MCF 10A (cell line): ENCODE measurements at regions of chr11 and their contacts with region 1.

Region 1: GRCh38 chr11:27158722-27159679 is 118.4 kb downstream of the BBOX1 start:
- DNase-seq: peak; percentile 80
- H3K4me3 Mint-ChIP-seq: no peak overlapping the region
- H3K27ac Mint-ChIP-seq: no peak overlapping the region
- H3K4me1 Mint-ChIP-seq: peaks cover 11% of the 10 kb centered on the region
- H3K27me3 Mint-ChIP-seq: no peaks in the 10 kb centered on the region
- CTCF ChIP-seq: peak; percentile 84

Region 2: GRCh38 chr11:26286472-26287066 is 872.4 kb before region 1 on chr11:
- CTCF ChIA-PET with region 1: interaction called, 12 read pairs
- POLR2A ChIA-PET with region 1: no interaction called
- intact Hi-C with region 1: no loop called
- DNase-seq: peak; percentile 31
- H3K4me3 Mint-ChIP-seq: no peak overlapping the region
- H3K27ac Mint-ChIP-seq: no peak overlapping the region
- H3K4me1 Mint-ChIP-seq: peaks cover 6% of the 10 kb centered on the region
- H3K27me3 Mint-ChIP-seq: peaks cover 18% of the 10 kb centered on the region
- CTCF ChIP-seq: peak; percentile 47

Region 3: GRCh38 chr11:26522912-26523610 is 635.9 kb before region 1 on chr11:
- CTCF ChIA-PET with region 1: interaction called, 6 read pairs
- POLR2A ChIA-PET with region 1: no interaction called
- intact Hi-C with region 1: loop called (anchors 2 kb)
- DNase-seq: peak; percentile 47
- H3K4me3 Mint-ChIP-seq: no peak overlapping the region
- H3K27ac Mint-ChIP-seq: no peak overlapping the region
- H3K4me1 Mint-ChIP-seq: no peaks in the 10 kb centered on the region
- H3K27me3 Mint-ChIP-seq: peaks cover 56% of the 10 kb centered on the region
- CTCF ChIP-seq: peak; percentile 33

Region 4: DNA sequence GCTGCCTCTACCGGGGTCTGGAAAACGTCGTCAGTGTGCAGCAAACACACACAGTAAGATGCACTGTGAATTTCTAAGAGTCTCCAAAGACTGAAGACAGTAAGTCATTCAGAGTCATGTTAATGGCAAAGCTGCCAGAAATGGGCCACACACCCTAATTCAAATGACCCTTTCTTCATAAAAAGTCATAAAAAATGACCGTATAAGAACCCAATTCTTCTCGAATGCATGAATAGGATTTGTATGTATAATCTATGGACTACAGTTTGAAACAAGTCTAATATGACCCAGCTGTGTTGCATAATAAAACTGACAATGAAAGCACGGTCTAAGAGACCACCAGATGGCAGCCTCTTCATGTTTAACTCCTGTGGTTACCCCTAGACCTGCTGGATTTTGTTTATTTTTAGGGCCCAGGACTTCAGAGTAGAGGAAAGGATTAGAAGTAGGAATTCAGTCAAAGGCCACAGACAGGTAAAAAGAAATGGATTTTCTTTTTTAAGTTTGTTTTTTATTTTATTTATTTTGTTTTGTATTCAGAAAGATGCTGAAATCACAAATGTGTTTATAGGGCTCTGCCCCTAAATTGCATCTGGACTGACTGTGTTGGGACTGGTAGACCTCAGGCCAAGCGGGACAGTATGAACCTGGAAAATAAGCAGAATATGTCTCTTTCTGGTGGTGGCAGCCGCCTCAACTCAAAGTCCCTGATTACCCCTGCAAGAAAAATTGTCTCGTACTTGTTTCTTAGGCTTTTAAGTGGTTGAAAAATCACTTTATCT is 405.1 kb before region 1 on chr11:
- CTCF ChIA-PET with region 1: interaction called, 62 read pairs
- POLR2A ChIA-PET with region 1: no interaction called
- intact Hi-C with region 1: loop called (anchors 1 kb)
- DNase-seq: peak; percentile 75
- H3K4me3 Mint-ChIP-seq: no peak overlapping the region
- H3K27ac Mint-ChIP-seq: no peak overlapping the region
- H3K4me1 Mint-ChIP-seq: no peaks in the 10 kb centered on the region
- H3K27me3 Mint-ChIP-seq: no peaks in the 10 kb centered on the region
- CTCF ChIP-seq: peak; percentile 84

Region 5: GRCh38 chr11:27040302-27041115 is 118.5 kb before region 1 on chr11 and contains the start of gene BBOX1:
- CTCF ChIA-PET with region 1: interaction called, 12 read pairs
- POLR2A ChIA-PET with region 1: interaction called, 3 read pairs
- intact Hi-C with region 1: no loop called
- DNase-seq: peak; percentile 92
- H3K4me3 Mint-ChIP-seq: peak within 1 kb of the TSS; percentile 59
- H3K27ac Mint-ChIP-seq: peak within 1 kb of the TSS; percentile 91
- H3K4me1 Mint-ChIP-seq: peaks cover 25% of the 10 kb centered on the region
- H3K27me3 Mint-ChIP-seq: no peaks in the 10 kb centered on the region
- CTCF ChIP-seq: no peak
- total RNA-seq, gene BBOX1: 0.33 TPM in 1 of 2 replicates, not detected in the other

Region 6: GRCh38 chr11:27107548-27107947 is 51.5 kb before region 1 on chr11:
- CTCF ChIA-PET with region 1: no interaction called
- POLR2A ChIA-PET with region 1: no interaction called
- intact Hi-C with region 1: no loop called
- DNase-seq: no peak
- H3K4me3 Mint-ChIP-seq: no peak overlapping the region
- H3K27ac Mint-ChIP-seq: no peak overlapping the region
- H3K4me1 Mint-ChIP-seq: no peaks in the 10 kb centered on the region
- H3K27me3 Mint-ChIP-seq: no peaks in the 10 kb centered on the region
- CTCF ChIP-seq: no peak

Region 7: DNA sequence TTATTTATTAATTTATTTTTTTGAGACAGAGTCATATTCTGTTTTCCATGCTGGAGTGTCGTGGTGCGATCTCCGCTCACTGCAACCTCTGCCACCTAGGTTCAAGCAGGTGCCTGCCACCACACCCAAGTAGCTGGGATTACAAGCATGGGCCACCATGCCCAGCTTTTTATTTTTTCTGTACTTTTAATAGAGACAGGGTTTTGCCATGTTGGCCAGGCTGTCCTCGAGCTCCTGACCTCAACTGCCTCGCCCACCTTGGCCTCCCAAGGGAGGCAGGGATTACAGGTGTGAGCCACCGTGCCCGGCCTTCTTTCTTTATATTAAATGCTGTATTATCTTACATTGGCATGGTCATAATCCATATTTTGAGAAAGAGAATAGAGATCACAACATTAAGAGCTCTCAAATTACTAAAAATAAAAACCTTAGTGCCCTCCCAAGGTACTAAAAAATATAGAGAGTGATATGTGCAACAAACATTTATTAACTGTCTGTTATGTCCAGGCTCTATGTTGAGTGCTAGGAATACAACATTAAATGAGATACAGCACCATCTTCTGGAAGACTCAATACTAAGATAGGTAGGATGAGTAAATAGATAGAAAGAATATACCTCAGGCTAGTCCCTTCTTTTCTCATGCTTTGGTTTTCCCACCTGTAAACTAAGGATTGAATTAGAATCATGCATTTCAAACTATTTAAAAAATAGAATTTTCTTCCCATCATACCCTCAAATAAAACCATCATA is 34.3 kb before region 1 on chr11:
- CTCF ChIA-PET with region 1: interaction called, 8 read pairs
- POLR2A ChIA-PET with region 1: interaction called, 4 read pairs
- intact Hi-C with region 1: loop called (anchors 2 kb)
- DNase-seq: peak; percentile 45
- H3K4me3 Mint-ChIP-seq: no peak overlapping the region
- H3K27ac Mint-ChIP-seq: no peak overlapping the region
- H3K4me1 Mint-ChIP-seq: peaks cover 5% of the 10 kb centered on the region
- H3K27me3 Mint-ChIP-seq: no peaks in the 10 kb centered on the region
- CTCF ChIP-seq: peak; percentile 28

Region 8: DNA sequence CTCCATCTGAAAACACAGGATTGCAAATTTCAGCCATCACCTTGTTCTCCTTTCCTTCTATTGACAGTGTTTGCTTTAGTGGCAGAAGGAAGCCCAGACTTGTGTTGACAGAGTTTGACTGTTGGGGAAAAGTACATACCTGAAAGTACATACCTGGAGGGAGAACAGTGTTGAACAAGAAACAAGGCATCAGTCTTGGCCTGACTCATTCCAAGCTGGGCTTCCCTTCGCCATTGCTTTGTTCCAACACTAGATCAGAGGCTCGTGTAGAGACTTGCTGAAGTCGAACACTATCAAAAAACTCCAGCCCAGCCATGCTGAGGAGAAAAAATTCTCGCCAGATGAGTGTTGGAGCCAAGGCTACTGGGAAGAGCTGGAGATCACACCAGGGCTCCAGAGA is 15.0 kb after region 1 on chr11:
- CTCF ChIA-PET with region 1: interaction called, 18 read pairs
- POLR2A ChIA-PET with region 1: interaction called, 3 read pairs
- intact Hi-C with region 1: no loop called
- DNase-seq: peak; percentile 64
- H3K4me3 Mint-ChIP-seq: no peak overlapping the region
- H3K27ac Mint-ChIP-seq: peak overlapping the region; percentile 10
- H3K4me1 Mint-ChIP-seq: peaks cover 15% of the 10 kb centered on the region
- H3K27me3 Mint-ChIP-seq: no peaks in the 10 kb centered on the region
- CTCF ChIP-seq: no peak